Activated naive CD4-positive, alpha-beta T cell treated with anti-CD3 and anti-CD28 coated beads for 36 hours (primary cell): ENCODE measurements at regions of chr12 and their contacts with region 1.

Region 1: DNA sequence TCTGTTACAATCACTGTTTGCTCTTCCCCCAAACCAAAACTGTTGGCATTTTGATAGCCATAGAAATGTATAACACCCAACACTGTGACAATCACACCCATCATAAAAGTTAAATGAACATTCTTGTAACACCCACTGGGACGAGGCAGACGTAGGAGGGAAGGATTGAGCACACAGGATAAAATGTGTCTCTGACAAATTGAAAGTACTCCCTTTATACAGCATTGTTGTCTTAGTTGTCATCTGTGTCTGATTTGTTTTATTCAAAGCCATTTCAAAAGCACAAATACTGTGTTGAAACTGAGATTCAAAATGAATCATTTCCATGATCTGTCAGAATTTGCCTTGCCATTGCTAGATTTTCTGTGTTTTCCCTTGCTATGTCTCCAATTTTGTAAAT is 436.3 kb downstream of the TMTC2 start:
- DNase-seq: no peak
- H3K4me3 Mint-ChIP-seq: no peak overlapping the region
- H3K27ac Mint-ChIP-seq: no peak overlapping the region
- H3K4me1 Mint-ChIP-seq: peaks cover 5% of the 10 kb centered on the region
- H3K27me3 Mint-ChIP-seq: peaks cover 2% of the 10 kb centered on the region

Region 2: DNA sequence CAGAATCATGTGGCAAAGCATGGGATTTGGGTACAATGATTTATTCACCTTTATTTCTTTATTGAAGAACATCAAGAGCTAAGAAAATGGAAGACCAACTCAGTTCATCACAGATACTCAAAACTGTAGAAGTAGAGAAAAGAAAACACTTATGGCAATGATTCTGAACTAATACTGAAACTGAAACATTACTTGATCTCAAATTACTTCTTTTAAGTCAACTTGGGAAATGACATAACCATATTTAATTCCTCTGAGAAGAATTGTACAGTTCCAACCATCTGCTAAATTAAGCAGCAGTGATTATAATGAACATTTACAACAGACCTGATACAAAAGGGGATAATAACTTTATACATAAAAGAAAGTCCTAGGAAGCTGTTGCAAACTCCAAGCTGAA is 30.1 kb after region 1 on chr12:
- CTCF ChIA-PET with region 1: interaction called, 4 read pairs
- intact Hi-C with region 1: loop called (anchors 1 kb)
- DNase-seq: no peak
- H3K4me3 Mint-ChIP-seq: no peak overlapping the region
- H3K27ac Mint-ChIP-seq: no peak overlapping the region
- H3K4me1 Mint-ChIP-seq: peaks cover 6% of the 10 kb centered on the region
- H3K27me3 Mint-ChIP-seq: no peaks in the 10 kb centered on the region